A549 (cell line): ENCODE measurements at regions of chr16 and their contacts with region 1.

Region 1: GRCh38 chr16:68800257-68800875 is 43.0 kb upstream of the TANGO6 start:
- DNase-seq: peak; percentile 77 to 81
- ATAC-seq: peak; percentile 93 to 96
- H3K4me3 ChIP-seq: no peak overlapping the region
- H3K27ac ChIP-seq: peak overlapping the region; percentile 41 to 57; a peak in 4 of 6 replicates
- H3K4me1 ChIP-seq: peaks cover 10% of the 10 kb centered on the region; the same call in 2 of the 3 replicates
- CTCF ChIP-seq: peak; percentile 81
- EP300 ChIP-seq: no peak
- POLR2A ChIP-seq: no peak
- RAD21 ChIP-seq: peak; percentile 88 to 93

Region 2: DNA sequence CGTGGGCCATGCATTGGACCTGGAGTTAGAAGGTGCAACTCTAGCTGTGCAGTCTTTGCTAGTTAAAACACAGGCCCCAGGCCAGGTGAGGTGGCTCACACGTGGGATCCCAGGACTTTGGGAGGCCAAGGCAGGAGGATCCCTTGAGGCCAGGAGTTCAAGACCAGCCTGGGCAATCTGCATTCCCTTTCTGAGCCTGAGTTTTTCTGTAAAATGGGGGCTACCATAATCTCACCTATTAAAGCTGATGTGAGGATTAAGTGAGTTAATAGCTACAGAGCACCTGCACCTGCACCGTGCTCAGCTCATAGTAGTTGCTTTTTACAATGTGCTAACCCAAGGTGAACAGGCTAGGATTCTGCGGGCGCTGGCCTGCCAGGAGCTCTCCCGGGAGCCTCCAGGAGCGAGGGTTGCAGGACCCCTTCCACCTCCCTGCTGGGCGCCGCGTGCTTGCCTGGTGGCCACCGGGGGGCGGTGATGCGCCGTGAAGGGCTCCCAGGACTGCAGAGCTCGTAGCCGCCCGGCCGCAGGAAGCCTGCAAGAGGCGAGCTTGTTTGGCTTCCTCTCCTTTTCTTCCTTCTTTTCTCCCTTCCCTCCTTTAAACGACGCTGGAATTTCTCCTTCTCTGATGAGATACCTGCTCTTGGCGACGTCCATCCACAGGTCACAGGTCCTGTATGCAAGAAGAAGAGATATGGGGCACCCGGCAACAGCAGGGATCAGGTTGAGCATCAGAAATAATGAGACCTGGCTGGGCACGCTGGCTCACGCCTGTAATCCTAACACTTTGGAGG is 210.0 kb before region 1 on chr16:
- CTCF ChIA-PET with region 1: interaction called, 11 read pairs
- POLR2A ChIA-PET with region 1: no interaction called
- DNase-seq: peak; percentile 48 to 71
- ATAC-seq: peak; percentile 86 to 100
- H3K4me3 ChIP-seq: no peak overlapping the region
- H3K27ac ChIP-seq: no peak overlapping the region
- H3K4me1 ChIP-seq: no peaks in the 10 kb centered on the region
- CTCF ChIP-seq: peak; percentile 54
- EP300 ChIP-seq: no peak
- POLR2A ChIP-seq: no peak
- RAD21 ChIP-seq: peak; percentile 83

Region 3: GRCh38 chr16:68743664-68744063 is 56.7 kb before region 1 on chr16:
- CTCF ChIA-PET with region 1: interaction called, 10 read pairs
- POLR2A ChIA-PET with region 1: interaction called, 3 read pairs
- DNase-seq: no peak
- ATAC-seq: no peak
- H3K4me3 ChIP-seq: no peak overlapping the region
- H3K27ac ChIP-seq: peak overlapping the region; percentile 78 to 94
- H3K4me1 ChIP-seq: peaks cover 85% of the 10 kb centered on the region
- CTCF ChIP-seq: no peak
- EP300 ChIP-seq: no peak
- POLR2A ChIP-seq: no peak
- RAD21 ChIP-seq: no peak

Region 4: DNA sequence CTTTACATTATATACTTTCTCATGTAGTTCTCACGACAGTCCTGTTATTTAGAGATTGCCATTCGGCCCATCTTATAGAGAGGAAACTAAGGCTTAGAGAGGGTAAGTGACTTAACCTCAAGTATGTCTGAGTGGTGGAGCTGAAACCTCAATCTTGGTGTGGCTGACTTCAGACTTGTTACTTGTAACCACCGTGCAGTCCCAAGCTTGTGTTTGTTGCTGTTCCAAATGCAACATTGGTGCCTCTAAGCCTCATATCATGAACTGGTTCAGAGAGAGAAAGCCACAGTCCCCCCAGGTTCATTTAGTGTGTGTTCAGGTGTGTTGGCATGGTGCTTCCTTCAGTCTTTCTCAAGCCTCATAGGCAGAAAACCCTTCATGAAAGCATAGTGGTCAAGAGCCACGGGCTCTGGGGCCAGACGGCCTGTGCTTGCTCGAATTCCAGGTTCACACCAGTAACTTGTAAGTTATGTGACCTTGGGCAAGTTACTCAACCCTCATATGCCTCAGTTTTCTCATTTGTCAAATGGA is 23.5 kb before region 1 on chr16:
- CTCF ChIA-PET with region 1: interaction called, 13 read pairs
- POLR2A ChIA-PET with region 1: no interaction called
- DNase-seq: no peak
- ATAC-seq: no peak
- H3K4me3 ChIP-seq: no peak overlapping the region
- H3K27ac ChIP-seq: no peak overlapping the region
- H3K4me1 ChIP-seq: 0 out of 3 replicates have a peak, but pooled peaks cover 9% of the 10 kb centered on the region
- CTCF ChIP-seq: no peak
- EP300 ChIP-seq: no peak
- POLR2A ChIP-seq: no peak
- RAD21 ChIP-seq: no peak

Region 5: GRCh38 chr16:68811503-68811902 is 11.1 kb after region 1 on chr16:
- CTCF ChIA-PET with region 1: interaction called, 38 read pairs
- POLR2A ChIA-PET with region 1: no interaction called
- DNase-seq: no peak
- ATAC-seq: no peak
- H3K4me3 ChIP-seq: no peak overlapping the region
- H3K27ac ChIP-seq: no peak overlapping the region
- H3K4me1 ChIP-seq: no peaks in the 10 kb centered on the region
- CTCF ChIP-seq: no peak
- EP300 ChIP-seq: no peak
- POLR2A ChIP-seq: no peak
- RAD21 ChIP-seq: no peak